ENCODE measurements at regions of chr3 and their contacts with region 1.

Region 1: GRCh38 chr3:188819939-188820338 is 351.8 kb upstream of the TPRG1 start:
- DNase-seq: no peak
- H3K4me3 ChIP-seq: no peak overlapping the region
- H3K27ac ChIP-seq: no peak overlapping the region
- H3K4me1 ChIP-seq: peaks cover 31% of the 10 kb centered on the region
- H3K27me3 ChIP-seq: no peaks in the 10 kb centered on the region
- CTCF ChIP-seq: no peak
- POLR2A ChIP-seq: no peak

Region 2: GRCh38 chr3:188780193-188781147 is 39.5 kb before region 1 on chr3:
- intact Hi-C with region 1: loop called (anchors 5 kb)
- DNase-seq: peak in 1 of 2 donors; percentile 91
- H3K4me3 ChIP-seq: no peak overlapping the region
- H3K27ac ChIP-seq: peak overlapping the region; percentile 14
- H3K4me1 ChIP-seq: peaks cover 28% of the 10 kb centered on the region
- H3K27me3 ChIP-seq: no peaks in the 10 kb centered on the region
- CTCF ChIP-seq: no peak
- POLR2A ChIP-seq: no peak

Measured in vagina (tissue), 2 donors.